ENCODE measurements at regions of chr3 and their contacts with region 1.

Region 1: GRCh38 chr3:186930641-186931531 is 560 bp downstream of the ST6GAL1 start:
- DNase-seq: peak; percentile 57
- H3K4me3 ChIP-seq: peak overlapping the region; percentile 86 to 95 (median 89)
- H3K27ac ChIP-seq: peak overlapping the region; percentile 42
- H3K4me1 ChIP-seq: peaks cover 26% of the 10 kb centered on the region
- H3K27me3 ChIP-seq: no peaks in the 10 kb centered on the region
- CTCF ChIP-seq: peak in 1 of 2 donors; percentile 29

Region 2: GRCh38 chr3:186901135-186901734 is 29.7 kb before region 1 on chr3:
- CTCF ChIA-PET with region 1: no interaction called
- dilution Hi-C with region 1: no loop called
- in situ Hi-C with region 1: no loop called
- intact Hi-C with region 1: loop called (anchors 2 kb)
- DNase-seq: no peak
- H3K4me3 ChIP-seq: no peak overlapping the region
- H3K27ac ChIP-seq: no peak overlapping the region
- H3K4me1 ChIP-seq: peaks cover 5% of the 10 kb centered on the region
- H3K27me3 ChIP-seq: no peaks in the 10 kb centered on the region
- CTCF ChIP-seq: no peak

Region 3: DNA sequence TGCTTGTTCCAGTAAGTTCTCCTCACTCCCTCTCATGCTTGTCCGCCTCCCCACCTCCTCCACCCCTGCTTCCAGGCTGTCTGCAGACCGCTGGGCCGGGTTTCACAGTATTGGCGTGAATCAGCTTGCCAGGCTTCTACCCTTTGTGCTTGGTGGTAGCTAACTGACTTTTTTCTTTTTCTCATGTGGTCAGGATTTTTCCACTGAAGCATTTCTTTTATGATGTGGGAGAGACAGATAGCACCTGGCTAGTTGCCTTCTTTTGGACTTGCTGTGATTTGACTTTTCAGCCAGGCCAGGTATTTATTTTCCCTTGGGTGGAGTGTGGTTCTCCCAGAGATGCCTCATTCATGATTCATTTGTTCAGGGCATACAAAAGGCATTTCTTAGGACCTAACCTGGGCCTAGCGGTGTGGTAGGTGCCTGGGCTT is 60.0 kb after region 1 on chr3:
- CTCF ChIA-PET with region 1: no interaction called
- dilution Hi-C with region 1: no loop called
- in situ Hi-C with region 1: no loop called
- intact Hi-C with region 1: loop called (anchors 2 kb)
- DNase-seq: peak; percentile 98
- H3K4me3 ChIP-seq: no peak overlapping the region
- H3K27ac ChIP-seq: peak overlapping the region; percentile 79
- H3K4me1 ChIP-seq: peaks cover 25% of the 10 kb centered on the region
- H3K27me3 ChIP-seq: no peaks in the 10 kb centered on the region
- CTCF ChIP-seq: no peak

Region 4: DNA sequence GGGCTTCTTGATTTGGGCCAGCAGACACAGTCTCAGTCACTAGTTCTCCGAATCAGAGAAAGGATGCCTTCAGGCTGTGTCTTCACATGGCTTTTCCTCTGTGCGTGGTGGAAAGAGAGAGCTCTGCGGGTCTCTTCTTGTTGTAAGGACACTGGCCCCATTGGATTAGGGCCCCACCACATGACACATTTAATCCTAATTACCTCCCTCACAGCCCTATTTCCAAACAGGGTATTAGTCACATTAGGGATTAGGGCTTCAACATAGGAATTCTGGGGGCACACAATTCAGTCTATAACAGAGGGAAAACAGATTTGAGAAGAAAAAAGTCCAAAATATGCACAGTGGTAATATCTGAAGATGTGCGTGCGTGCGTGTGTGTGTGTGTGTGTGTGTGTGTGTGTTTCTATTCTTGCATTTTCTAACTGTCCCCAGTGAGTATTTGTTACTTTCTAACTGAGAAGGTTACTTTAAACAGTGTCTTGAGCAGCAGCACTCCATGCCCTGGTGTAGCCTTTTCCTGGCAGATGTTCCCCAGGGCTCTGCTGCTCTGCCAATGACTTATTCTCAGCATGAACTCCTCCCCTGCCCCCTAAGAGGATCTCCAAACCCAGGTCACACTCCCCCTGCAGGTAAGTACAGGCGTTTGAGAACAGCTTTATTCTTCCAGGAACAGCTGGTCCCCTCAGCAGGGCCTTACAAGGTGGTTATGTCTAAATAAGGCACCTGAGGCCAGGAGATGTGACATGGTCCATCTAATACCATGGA is 135.5 kb after region 1 on chr3:
- CTCF ChIA-PET with region 1: no interaction called
- dilution Hi-C with region 1: no loop called
- in situ Hi-C with region 1: no loop called
- intact Hi-C with region 1: loop called (anchors 5 kb)
- DNase-seq: peak; percentile 64
- H3K4me3 ChIP-seq: no peak overlapping the region
- H3K27ac ChIP-seq: no peak overlapping the region
- H3K4me1 ChIP-seq: peaks cover 30% of the 10 kb centered on the region
- H3K27me3 ChIP-seq: no peaks in the 10 kb centered on the region
- CTCF ChIP-seq: peak; percentile 39 to 48

Region 5: GRCh38 chr3:187085933-187086332 is 155.0 kb after region 1 on chr3:
- CTCF ChIA-PET with region 1: no interaction called
- dilution Hi-C with region 1: no loop called
- in situ Hi-C with region 1: no loop called
- intact Hi-C with region 1: no loop called
- DNase-seq: no peak
- H3K4me3 ChIP-seq: no peak overlapping the region
- H3K27ac ChIP-seq: no peak overlapping the region
- H3K4me1 ChIP-seq: peaks cover 6% of the 10 kb centered on the region
- H3K27me3 ChIP-seq: no peaks in the 10 kb centered on the region
- CTCF ChIP-seq: no peak

Region 6: DNA sequence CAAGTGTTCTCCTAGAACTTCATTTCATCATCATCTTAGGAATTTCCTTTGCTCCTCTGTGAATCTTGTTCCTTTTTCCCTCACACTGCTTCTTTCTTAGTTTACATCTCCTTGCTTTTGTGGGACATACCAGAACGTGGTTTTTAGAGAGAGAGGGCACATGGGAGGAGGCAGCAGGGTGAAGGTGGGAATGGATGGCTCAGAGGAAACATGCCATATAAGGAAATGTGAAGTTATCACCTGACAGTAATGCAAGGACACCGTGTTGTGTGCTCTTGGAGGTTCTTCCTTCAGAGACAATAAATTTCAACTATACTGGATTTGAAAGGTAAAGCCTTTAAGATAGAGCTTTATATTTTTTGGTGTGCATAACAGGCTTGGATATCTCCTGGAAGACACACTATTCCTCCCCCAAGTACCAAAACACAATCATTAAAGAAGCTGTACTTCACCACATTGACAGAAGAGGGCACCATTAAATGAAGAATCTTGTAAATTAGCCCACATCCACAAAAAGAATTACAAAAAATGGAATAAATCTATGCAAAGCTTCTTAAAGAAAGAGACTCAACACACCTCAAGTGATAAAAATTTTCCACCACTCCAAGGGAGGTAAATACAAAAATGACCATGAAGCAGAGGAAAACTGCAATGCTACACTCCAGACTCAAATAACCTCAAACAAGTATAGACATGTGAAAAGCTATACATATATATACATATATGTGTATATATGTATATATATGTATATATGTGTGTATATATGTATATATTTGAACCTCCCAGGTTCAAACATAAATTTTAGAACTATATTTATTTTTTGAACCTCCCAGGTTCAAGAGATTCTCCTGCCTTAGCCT is 182.3 kb after region 1 on chr3:
- CTCF ChIA-PET with region 1: no interaction called
- dilution Hi-C with region 1: no loop called
- in situ Hi-C with region 1: no loop called
- intact Hi-C with region 1: loop called (anchors 2 kb)
- DNase-seq: peak; percentile 24
- H3K4me3 ChIP-seq: no peak overlapping the region
- H3K27ac ChIP-seq: no peak overlapping the region
- H3K4me1 ChIP-seq: peaks cover 7% of the 10 kb centered on the region
- H3K27me3 ChIP-seq: no peaks in the 10 kb centered on the region
- CTCF ChIP-seq: peak; percentile 48 to 54

Region 7: GRCh38 chr3:187164885-187165543 is 234.1 kb after region 1 on chr3:
- CTCF ChIA-PET with region 1: interaction called, 7 read pairs
- dilution Hi-C with region 1: no loop called
- in situ Hi-C with region 1: no loop called
- intact Hi-C with region 1: loop called (anchors 5 kb)
- DNase-seq: peak; percentile 55
- H3K4me3 ChIP-seq: no peak overlapping the region
- H3K27ac ChIP-seq: no peak overlapping the region
- H3K4me1 ChIP-seq: peaks cover 10% of the 10 kb centered on the region
- H3K27me3 ChIP-seq: no peaks in the 10 kb centered on the region
- CTCF ChIP-seq: peak; percentile 60 to 64